T-cell (primary cell): ENCODE measurements at regions of chr13 and their contacts with region 1.

Region 1: DNA sequence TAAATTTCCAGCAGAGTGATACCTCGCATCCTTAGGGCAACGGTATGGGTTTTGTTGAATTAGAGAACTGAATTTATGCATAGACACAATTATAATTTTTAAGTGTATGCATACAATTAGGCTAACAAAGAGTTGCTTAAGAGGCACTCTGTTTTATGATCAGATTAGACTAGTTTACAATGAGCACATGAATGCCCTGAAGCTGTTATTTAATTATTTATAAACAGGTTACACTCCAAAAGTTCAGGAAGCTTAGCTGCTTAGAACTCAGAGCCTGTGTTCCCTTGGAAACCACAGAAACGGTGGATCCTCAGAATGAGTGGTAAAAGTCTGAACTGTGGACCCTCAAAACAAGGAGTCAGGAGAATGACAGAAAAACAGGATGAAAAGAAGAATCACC is 72.5 kb upstream of the FBXL3 start:
- DNase-seq: no peak
- ATAC-seq: no peak
- H3K4me3 ChIP-seq: no peak overlapping the region
- H3K4me3 Mint-ChIP-seq: no peak overlapping the region
- H3K27ac ChIP-seq: no peak overlapping the region
- H3K27ac Mint-ChIP-seq: no peak overlapping the region
- H3K4me1 ChIP-seq: no peaks in the 10 kb centered on the region
- H3K4me1 Mint-ChIP-seq: peaks cover 0 to 2% (median 2%) of the 10 kb centered on the region in 3 donors
- H3K27me3 ChIP-seq: no peaks in the 10 kb centered on the region
- H3K27me3 Mint-ChIP-seq: no peaks in the 10 kb centered on the region

Region 2: DNA sequence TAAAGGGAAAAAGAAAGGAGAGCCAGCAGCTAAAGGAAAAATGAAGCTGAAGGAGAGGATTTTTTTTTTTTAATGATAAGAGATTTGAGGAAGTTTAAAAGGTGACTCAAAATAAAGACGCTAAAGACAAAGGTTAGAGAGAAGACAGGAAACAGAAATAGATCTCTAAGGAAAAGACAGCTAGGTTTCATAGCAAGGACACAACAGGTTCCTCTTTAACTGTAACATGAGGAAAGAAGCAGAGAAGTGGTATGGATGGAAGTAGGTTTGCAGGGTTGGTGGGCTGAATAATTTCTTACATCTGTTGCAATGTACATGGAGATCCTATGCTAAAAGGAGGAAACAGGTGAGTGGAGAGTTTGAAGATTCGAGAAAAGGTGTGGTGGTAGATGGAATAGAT is 120.0 kb after region 1 on chr13:
- CTCF ChIA-PET with region 1: no interaction called
- POLR2A ChIA-PET with region 1: interaction called in 1 of 2 experiments, 11 read pairs
- DNase-seq: no peak
- ATAC-seq: no peak
- H3K4me3 ChIP-seq: no peak overlapping the region
- H3K4me3 Mint-ChIP-seq: no peak overlapping the region
- H3K27ac ChIP-seq: no peak overlapping the region
- H3K27ac Mint-ChIP-seq: no peak overlapping the region
- H3K4me1 ChIP-seq: no peaks in the 10 kb centered on the region
- H3K4me1 Mint-ChIP-seq: peaks cover 17 to 21% (median 17%) of the 10 kb centered on the region in 3 donors
- H3K27me3 ChIP-seq: no peaks in the 10 kb centered on the region
- H3K27me3 Mint-ChIP-seq: no peaks in the 10 kb centered on the region